WTC11 (cell line): ENCODE measurements at regions of chr11 and their contacts with region 1.

Region 1: GRCh38 chr11:93234602-93235207 is 36.9 kb upstream of the SLC36A4 start:
- DNase-seq: peak; percentile 79
- ATAC-seq: peak; percentile 99
- H3K4me3 Mint-ChIP-seq: no peak overlapping the region
- H3K27ac Mint-ChIP-seq: no peak overlapping the region
- H3K4me1 Mint-ChIP-seq: peaks cover 8% of the 10 kb centered on the region; the same call in 1 of the 2 replicates
- H3K27me3 Mint-ChIP-seq: peaks cover 3% of the 10 kb centered on the region; the same call in 1 of the 2 replicates
- CTCF ChIP-seq: peak; percentile 55; the same call in 1 of the 2 replicates

Region 2: GRCh38 chr11:93370260-93370659 is 135.6 kb after region 1 on chr11:
- CTCF ChIA-PET with region 1: no interaction called
- POLR2A ChIA-PET with region 1: no interaction called
- DNase-seq: no peak
- ATAC-seq: no peak
- H3K4me3 Mint-ChIP-seq: no peak overlapping the region
- H3K27ac Mint-ChIP-seq: no peak overlapping the region
- H3K4me1 Mint-ChIP-seq: peaks cover 26% of the 10 kb centered on the region
- H3K27me3 Mint-ChIP-seq: no peaks in the 10 kb centered on the region
- CTCF ChIP-seq: no peak

Region 3: DNA sequence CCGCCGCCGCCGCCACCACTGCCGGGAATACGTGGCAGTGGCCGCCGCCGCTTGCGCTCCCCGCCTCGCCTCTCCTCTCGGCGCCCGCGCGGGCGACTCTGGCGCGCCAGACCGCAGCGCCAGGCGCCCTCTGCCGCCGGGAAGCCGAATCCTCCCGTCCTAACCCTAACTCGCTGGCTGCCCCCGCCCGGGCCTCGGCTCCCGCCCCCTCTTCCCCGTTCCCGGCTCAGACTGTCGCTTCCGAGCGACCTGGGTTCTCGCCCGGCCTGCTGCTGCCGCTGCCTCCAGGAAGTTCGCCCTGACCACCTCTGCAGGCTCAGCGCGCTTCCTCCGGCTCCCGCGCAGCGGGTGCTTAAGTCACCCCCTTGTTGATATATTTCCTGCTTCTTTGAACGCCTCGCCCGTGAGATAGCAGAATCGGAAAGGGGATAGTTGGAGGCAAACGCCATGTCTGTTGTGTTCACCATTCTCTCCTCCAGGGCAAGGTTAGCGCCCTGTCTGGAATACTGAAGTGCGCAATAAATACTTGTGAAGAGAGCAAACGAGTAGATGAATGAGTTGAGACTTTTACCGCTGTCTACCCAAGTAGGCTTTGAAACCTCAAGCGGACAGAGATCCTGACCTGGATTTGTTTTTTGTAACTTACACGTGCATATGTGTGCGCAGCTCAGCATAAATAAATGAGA is 308.7 kb after region 1 on chr11 and contains the start of gene SMCO4:
- CTCF ChIA-PET with region 1: interaction called, 18 read pairs
- POLR2A ChIA-PET with region 1: no interaction called
- DNase-seq: peak; percentile 90
- ATAC-seq: peak; percentile 84
- H3K4me3 Mint-ChIP-seq: peak within 1 kb of the TSS; percentile 85
- H3K27ac Mint-ChIP-seq: peak within 1 kb of the TSS; percentile 96
- H3K4me1 Mint-ChIP-seq: peaks cover 70% of the 10 kb centered on the region
- H3K27me3 Mint-ChIP-seq: no peaks in the 10 kb centered on the region
- CTCF ChIP-seq: peak; percentile 27; the same call in 1 of the 2 replicates
- total RNA-seq, gene SMCO4: 42.3 to 50.1 TPM (median 42.9 TPM) in 3 replicates

Region 4: GRCh38 chr11:93652161-93652597 is 417.5 kb after region 1 on chr11:
- CTCF ChIA-PET with region 1: interaction called, 15 read pairs
- POLR2A ChIA-PET with region 1: no interaction called
- DNase-seq: no peak
- ATAC-seq: peak; percentile 44
- H3K4me3 Mint-ChIP-seq: no peak overlapping the region
- H3K27ac Mint-ChIP-seq: no peak overlapping the region
- H3K4me1 Mint-ChIP-seq: no peaks in the 10 kb centered on the region
- H3K27me3 Mint-ChIP-seq: no peaks in the 10 kb centered on the region; the same call in 1 of the 2 replicates
- CTCF ChIP-seq: peak; percentile 86